ENCODE measurements at regions of chr1 and their contacts with region 1.

Region 1: GRCh38 chr1:8137481-8138244 is 111.6 kb upstream of the ERRFI1 start:
- DNase-seq: no peak
- H3K4me3 ChIP-seq: no peak overlapping the region
- H3K27ac ChIP-seq: peak overlapping the region; percentile 53 to 91 (median 70)
- H3K4me1 ChIP-seq: peaks cover 9 to 29% (median 18%) of the 10 kb centered on the region in 4 donors
- H3K27me3 ChIP-seq: no peaks in the 10 kb centered on the region
- CTCF ChIP-seq: no peak
- EP300 ChIP-seq: no peak
- POLR2A ChIP-seq: no peak

Region 2: GRCh38 chr1:7961216-7962015 is 176.2 kb before region 1 on chr1 and contains the start of gene PARK7:
- in situ Hi-C with region 1: no loop called
- intact Hi-C with region 1: no loop called
- DNase-seq: peak; percentile 100
- H3K4me3 ChIP-seq: peak within 1 kb of the TSS; percentile 74 to 86 (median 82)
- H3K27ac ChIP-seq: peak within 1 kb of the TSS; percentile 89 to 95 (median 94)
- H3K4me1 ChIP-seq: peaks cover 6 to 27% (median 17%) of the 10 kb centered on the region in 4 donors
- H3K27me3 ChIP-seq: no peaks in the 10 kb centered on the region
- CTCF ChIP-seq: peak; percentile 34 to 57 (median 41)
- EP300 ChIP-seq: no peak
- POLR2A ChIP-seq: peak; percentile 98
- total RNA-seq, gene PARK7: 40.4 to 103 (median 82.8) TPM

Region 3: GRCh38 chr1:8026153-8026975 is 111.3 kb before region 1 on chr1 and contains the start of gene ERRFI1:
- in situ Hi-C with region 1: no loop called
- intact Hi-C with region 1: loop called (anchors 5 kb)
- DNase-seq: peak; percentile 95
- H3K4me3 ChIP-seq: peak within 1 kb of the TSS; percentile 68 to 92 (median 90)
- H3K27ac ChIP-seq: peak within 1 kb of the TSS; percentile 92 to 96 (median 94)
- H3K4me1 ChIP-seq: peaks cover 13 to 71% (median 41%) of the 10 kb centered on the region in 4 donors
- H3K27me3 ChIP-seq: no peaks in the 10 kb centered on the region
- CTCF ChIP-seq: peak in 1 of 5 experiments; percentile 4
- EP300 ChIP-seq: no peak
- POLR2A ChIP-seq: peak; percentile 95
- total RNA-seq, gene ERRFI1: 10.0 to 101 (median 70.0) TPM

Region 4: DNA sequence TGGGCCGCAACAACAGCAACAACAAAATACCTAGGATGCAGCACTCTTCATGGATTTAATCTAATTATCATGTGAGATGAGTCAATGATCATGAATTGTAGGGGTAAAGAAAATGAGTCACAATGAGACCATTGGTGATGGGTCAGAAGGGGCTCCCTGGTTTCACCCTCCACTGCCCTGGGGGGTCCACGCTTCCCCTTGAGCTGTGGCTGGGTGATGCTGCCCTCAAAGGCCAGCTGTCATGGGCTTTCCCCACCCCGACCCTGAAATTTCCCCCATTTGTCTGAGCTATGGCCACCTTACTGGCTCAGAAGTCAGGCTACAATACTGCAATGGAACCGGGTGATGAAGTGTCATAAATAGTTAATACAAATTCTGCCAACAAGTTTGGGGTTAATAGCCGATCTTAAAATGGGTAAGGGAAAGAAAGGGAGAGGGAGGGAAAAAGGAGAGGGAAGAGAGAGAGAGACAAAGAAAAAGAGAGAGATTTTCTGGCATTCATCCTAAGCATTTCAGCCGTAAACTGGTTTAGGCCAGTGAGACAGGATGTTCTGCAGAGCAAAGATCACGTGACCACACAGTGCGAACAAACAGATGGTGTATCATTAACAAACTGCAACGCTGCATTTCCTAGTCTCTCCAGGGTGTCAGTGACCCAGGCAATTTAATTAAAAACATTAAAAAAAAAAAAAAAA is 31.8 kb after region 1 on chr1:
- in situ Hi-C with region 1: no loop called
- intact Hi-C with region 1: loop called (anchors 5 kb)
- DNase-seq: peak; percentile 67
- H3K4me3 ChIP-seq: no peak overlapping the region
- H3K27ac ChIP-seq: peak overlapping the region; percentile 74 to 83 (median 78)
- H3K4me1 ChIP-seq: peaks cover 14 to 30% (median 21%) of the 10 kb centered on the region in 4 donors
- H3K27me3 ChIP-seq: no peaks in the 10 kb centered on the region
- CTCF ChIP-seq: peak in 1 of 5 experiments; percentile 41
- EP300 ChIP-seq: peak; percentile 80
- POLR2A ChIP-seq: no peak